ENCODE measurements at regions of chr18 and their contacts with region 1.

Region 1: GRCh38 chr18:55778788-55779690 is 191.0 kb upstream of the TCF4 start:
- DNase-seq: no peak
- ATAC-seq: no peak
- H3K4me3 ChIP-seq: peak overlapping the region in 1 of 2 donors; percentile 80
- H3K4me3 Mint-ChIP-seq: peak overlapping the region; percentile 31 to 60 (median 37)
- H3K27ac ChIP-seq: no peak overlapping the region
- H3K27ac Mint-ChIP-seq: peak overlapping the region in 1 of 2 donors; percentile 6
- H3K4me1 ChIP-seq: peaks cover 4% of the 10 kb centered on the region in 2 experiments
- H3K4me1 Mint-ChIP-seq: peaks cover 5 to 12% (median 7%) of the 10 kb centered on the region in 3 donors
- H3K27me3 ChIP-seq: peaks cover 3 to 10% of the 10 kb centered on the region in 2 experiments
- H3K27me3 Mint-ChIP-seq: peaks cover 50 to 52% of the 10 kb centered on the region in 2 donors

Region 2: DNA sequence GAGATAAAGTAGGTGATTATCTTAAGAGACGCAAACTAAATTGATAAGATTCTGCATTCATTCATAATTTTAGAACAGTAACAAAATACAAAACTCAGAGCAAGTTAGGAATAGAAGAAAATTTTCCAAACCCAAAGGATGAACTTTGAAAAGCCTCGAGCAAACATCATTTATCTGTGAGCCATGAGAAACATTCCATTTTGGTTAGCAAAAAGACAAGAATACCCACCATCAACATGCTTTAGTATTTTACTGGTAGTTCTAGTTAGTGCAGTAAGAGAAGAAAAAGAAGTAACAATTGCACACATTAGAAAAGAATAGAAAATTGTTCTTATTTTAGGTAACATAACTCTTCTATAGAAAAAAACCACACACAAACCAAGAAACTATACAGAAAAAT is 100.3 kb after region 1 on chr18:
- CTCF ChIA-PET with region 1: no interaction called
- POLR2A ChIA-PET with region 1: no interaction called
- DNase-seq: no peak
- ATAC-seq: no peak
- H3K4me3 ChIP-seq: no peak overlapping the region
- H3K4me3 Mint-ChIP-seq: no peak overlapping the region
- H3K27ac ChIP-seq: no peak overlapping the region
- H3K27ac Mint-ChIP-seq: no peak overlapping the region
- H3K4me1 ChIP-seq: no peaks in the 10 kb centered on the region
- H3K4me1 Mint-ChIP-seq: no peaks in the 10 kb centered on the region
- H3K27me3 ChIP-seq: no peaks in the 10 kb centered on the region
- H3K27me3 Mint-ChIP-seq: no peaks in the 10 kb centered on the region

Region 3: GRCh38 chr18:56273541-56274219 is 494.6 kb after region 1 on chr18:
- CTCF ChIA-PET with region 1: no interaction called
- POLR2A ChIA-PET with region 1: no interaction called
- DNase-seq: no peak
- ATAC-seq: no peak
- H3K4me3 ChIP-seq: no peak overlapping the region
- H3K4me3 Mint-ChIP-seq: no peak overlapping the region
- H3K27ac ChIP-seq: no peak overlapping the region
- H3K27ac Mint-ChIP-seq: no peak overlapping the region
- H3K4me1 ChIP-seq: no peaks in the 10 kb centered on the region
- H3K4me1 Mint-ChIP-seq: no peaks in the 10 kb centered on the region
- H3K27me3 ChIP-seq: no peaks in the 10 kb centered on the region
- H3K27me3 Mint-ChIP-seq: peaks cover 0 to 4% of the 10 kb centered on the region in 2 donors

Region 4: GRCh38 chr18:56337507-56337906 is 558.5 kb after region 1 on chr18:
- CTCF ChIA-PET with region 1: no interaction called
- POLR2A ChIA-PET with region 1: interaction called in 1 of 2 experiments, 14 read pairs
- DNase-seq: no peak
- ATAC-seq: no peak
- H3K4me3 ChIP-seq: no peak overlapping the region
- H3K4me3 Mint-ChIP-seq: no peak overlapping the region
- H3K27ac ChIP-seq: no peak overlapping the region
- H3K27ac Mint-ChIP-seq: no peak overlapping the region
- H3K4me1 ChIP-seq: no peaks in the 10 kb centered on the region
- H3K4me1 Mint-ChIP-seq: no peaks in the 10 kb centered on the region
- H3K27me3 ChIP-seq: no peaks in the 10 kb centered on the region
- H3K27me3 Mint-ChIP-seq: no peaks in the 10 kb centered on the region

Measured in T-cell (primary cell).